Head of caudate nucleus (tissue), 42 donors: ENCODE measurements at regions of chr5 and their contacts with region 1.

Region 1: DNA sequence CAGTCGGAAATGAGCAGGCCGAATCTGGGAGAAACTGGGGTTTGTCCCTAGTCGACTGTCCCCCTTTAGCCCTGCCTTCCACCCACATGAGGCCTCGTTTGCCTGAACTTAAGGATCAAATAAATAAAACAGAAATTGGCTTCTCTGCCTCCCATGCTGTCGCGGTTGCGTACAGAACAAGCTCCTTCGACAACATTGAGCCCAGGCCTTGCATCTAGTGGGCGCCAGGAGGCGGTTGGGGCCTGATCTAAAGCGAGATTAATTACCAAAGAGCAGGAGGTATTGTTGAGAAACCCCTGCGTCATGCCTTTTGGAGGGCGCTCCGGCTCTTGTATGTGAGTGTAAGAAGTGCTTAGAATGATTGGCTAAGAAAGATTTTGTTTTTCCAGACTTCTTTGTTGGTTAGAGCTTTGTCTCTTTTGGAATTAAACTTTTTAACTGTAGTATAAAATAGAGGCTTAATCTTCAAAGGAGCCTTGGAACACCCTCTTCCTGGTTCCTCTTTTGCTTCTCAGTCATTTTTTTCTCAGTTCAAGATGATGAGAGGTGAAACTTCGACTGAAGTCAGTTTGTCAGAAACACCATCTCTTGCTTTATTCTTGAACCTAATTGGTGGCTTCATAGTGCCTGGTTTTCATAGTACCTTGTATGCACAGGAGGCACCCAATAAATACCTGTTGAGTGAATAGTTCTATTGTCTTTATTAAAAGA is 827 bp downstream of the ATP6V0E1 start:
- DNase-seq: peak; percentile 24 to 86 (median 66)

Region 2: GRCh38 chr5:173057062-173057924 is 72.9 kb after region 1 on chr5:
- intact Hi-C with region 1: loop called (anchors 2 kb)
- DNase-seq: peak; percentile 93 to 99 (median 98)

Region 3: GRCh38 chr5:173144200-173145176 is 160.1 kb after region 1 on chr5 and contains the start of gene BNIP1:
- intact Hi-C with region 1: loop called (anchors 10 kb)
- DNase-seq: peak; percentile 84 to 97 (median 93)

Region 4: DNA sequence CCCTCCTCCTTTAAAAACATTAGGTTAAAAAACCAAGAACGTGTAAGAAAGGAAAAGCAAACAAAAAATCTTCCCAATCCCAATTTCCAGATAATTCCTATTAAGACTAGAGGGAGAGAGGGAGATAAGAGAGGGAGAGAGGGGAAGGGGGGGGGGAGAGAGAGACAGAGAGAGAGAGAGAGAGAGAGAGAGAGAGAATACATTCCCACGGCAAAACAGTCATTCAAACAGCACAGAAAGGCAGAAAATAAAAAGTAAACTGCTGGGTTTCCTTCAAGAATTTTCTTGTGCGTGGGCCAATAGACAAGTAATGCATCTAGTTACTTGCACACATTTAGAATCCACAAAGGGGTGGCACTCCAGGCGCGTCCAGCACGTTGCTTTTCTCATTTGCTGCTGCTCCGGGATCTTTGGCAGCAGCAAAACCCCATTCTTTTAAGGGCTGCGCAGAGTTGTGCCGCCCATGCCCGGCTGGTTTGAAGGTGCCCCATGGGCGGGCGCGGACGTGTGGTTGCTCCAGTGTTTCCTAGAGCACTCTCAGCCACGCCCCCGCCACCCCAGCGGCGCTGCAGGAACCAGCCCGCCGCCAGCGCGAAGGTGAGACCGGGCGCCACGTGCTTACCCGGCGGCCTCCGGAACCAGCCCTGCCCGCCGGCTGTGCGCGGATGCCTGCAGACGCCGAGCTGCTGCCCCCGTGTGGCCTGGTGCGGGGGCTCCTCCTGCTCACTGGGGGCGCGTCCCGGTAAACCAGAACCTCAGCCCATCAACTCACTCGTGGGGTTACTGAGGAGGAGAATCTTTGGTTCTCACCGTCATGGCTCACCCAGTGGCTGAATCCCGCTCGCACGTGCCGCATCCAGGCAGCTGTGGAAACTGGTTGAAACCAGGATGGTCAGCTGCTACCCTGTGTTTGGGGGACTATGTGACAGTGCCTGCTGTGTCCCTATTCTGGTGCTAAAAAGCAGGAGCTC is 299.2 kb after region 1 on chr5:
- intact Hi-C with region 1: loop called (anchors 5 kb)
- DNase-seq: peak; percentile 20 to 86 (median 71)

Region 5: GRCh38 chr5:173331956-173332479 is 347.6 kb after region 1 on chr5:
- intact Hi-C with region 1: loop called (anchors 5 kb)
- DNase-seq: peak; percentile 43 to 93 (median 82)